AG04449 (cell line): ENCODE measurements at regions of chr1 and their contacts with region 1.

Region 1: GRCh38 chr1:1906185-1907097 is 8.6 kb upstream of the CALML6 start:
- DNase-seq: no peak
- H3K4me3 ChIP-seq: no peak overlapping the region
- CTCF ChIP-seq: peak; percentile 97

Region 2: DNA sequence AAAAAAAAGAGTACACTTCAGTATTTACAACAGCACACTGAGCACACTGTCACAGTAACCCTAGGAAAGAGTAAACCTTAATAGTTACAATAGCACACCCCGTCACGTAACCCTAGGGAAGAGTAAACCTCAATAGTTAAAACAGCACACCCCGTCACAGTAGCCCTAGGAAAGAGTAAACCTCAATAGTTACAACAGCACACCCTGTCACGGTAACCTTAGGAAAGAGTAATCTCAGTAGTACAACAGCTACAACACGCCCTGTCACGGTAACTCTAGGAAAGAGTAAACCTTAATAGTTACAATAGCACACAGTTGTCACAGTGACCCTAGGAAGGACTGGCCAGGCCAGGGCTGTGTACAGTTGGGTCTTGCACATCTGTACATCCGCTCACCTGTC is 185.2 kb before region 1 on chr1:
- CTCF ChIA-PET with region 1: interaction called, 11 read pairs
- POLR2A ChIA-PET with region 1: no interaction called
- DNase-seq: no peak
- H3K4me3 ChIP-seq: no peak overlapping the region
- CTCF ChIP-seq: no peak

Region 3: DNA sequence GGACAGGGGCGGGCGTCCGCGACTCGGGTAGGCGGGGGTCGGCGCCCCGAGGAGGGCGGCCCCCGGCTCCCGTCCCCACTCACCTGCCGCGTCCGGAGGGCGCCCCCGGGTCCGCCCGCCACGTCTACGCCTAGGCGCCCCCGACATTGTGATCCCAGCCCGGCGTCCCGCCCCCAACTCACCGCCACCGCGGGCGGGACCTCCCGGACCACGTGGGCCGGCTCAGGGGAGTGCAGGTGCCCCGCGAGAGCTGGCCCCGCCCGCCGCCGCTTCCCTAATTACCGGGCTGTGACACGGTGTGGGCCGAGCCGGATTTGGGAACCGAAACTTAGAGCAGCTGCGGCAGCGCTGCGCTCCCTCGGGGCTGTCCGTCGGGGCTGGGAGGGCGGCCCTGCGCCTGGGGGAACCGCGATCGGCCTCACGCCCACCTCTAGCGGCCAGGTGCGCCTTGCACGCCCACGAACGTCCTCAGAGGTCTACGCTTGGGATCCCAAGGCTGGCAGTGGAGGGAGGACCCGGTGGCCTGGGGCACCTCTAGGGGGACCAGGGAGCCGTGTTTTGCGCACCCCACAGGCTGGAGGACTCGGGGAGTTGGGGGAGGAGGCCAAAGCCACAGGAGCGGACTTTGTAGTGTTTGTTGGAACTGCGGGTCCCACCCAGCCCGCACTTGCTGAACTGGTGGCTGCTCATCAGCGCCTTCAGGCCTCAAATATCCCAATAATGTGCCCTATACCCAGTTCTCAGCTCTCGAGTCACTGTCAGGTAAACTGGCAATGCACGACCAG is 127.6 kb before region 1 on chr1:
- CTCF ChIA-PET with region 1: interaction called, 18 read pairs
- POLR2A ChIA-PET with region 1: interaction called, 4 read pairs
- DNase-seq: no peak
- H3K4me3 ChIP-seq: peak overlapping the region; percentile 82
- CTCF ChIP-seq: no peak

Region 4: DNA sequence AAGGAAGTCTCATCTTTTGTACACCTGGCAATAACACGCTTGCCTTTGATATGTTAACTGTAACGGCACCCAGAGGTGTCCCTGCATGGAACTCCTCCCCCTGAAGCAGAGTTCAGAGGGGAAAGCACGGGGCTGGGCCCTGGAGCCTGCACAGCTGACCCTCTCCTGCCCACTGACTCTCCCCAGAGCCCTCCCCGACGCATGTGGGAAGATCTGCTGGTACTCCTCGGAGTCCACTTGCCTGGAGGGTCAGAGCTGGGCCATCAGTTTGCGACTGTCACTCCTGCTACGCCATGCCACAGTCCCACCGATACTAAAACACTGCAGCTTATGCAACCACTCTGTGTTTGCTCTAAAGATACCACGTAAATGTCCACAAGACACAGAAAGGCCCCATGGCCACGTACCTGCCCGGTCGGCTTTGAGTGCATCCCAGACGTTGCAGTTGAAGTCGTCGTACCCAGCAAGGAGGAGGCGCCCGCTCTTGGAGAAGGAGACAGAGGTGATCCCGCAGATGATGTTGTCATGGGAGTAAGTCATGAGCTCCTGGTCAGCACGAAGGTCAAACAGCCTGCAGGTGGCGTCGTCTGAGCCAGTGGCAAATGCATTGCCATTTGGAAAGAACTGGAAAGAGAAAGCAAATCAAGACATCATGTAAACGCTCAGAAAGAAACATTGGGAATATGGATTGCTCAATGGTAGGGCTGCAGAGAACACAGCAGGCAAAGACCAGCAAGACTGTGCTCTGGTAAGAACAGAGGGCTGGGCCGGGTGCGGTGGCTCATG is 117.6 kb before region 1 on chr1:
- CTCF ChIA-PET with region 1: interaction called, 17 read pairs
- POLR2A ChIA-PET with region 1: no interaction called
- DNase-seq: no peak
- H3K4me3 ChIP-seq: no peak overlapping the region
- CTCF ChIP-seq: peak; percentile 23

Region 5: GRCh38 chr1:1804301-1804700 is 102.1 kb before region 1 on chr1:
- CTCF ChIA-PET with region 1: interaction called, 15 read pairs
- POLR2A ChIA-PET with region 1: no interaction called
- DNase-seq: no peak
- H3K4me3 ChIP-seq: no peak overlapping the region
- CTCF ChIP-seq: no peak

Region 6: DNA sequence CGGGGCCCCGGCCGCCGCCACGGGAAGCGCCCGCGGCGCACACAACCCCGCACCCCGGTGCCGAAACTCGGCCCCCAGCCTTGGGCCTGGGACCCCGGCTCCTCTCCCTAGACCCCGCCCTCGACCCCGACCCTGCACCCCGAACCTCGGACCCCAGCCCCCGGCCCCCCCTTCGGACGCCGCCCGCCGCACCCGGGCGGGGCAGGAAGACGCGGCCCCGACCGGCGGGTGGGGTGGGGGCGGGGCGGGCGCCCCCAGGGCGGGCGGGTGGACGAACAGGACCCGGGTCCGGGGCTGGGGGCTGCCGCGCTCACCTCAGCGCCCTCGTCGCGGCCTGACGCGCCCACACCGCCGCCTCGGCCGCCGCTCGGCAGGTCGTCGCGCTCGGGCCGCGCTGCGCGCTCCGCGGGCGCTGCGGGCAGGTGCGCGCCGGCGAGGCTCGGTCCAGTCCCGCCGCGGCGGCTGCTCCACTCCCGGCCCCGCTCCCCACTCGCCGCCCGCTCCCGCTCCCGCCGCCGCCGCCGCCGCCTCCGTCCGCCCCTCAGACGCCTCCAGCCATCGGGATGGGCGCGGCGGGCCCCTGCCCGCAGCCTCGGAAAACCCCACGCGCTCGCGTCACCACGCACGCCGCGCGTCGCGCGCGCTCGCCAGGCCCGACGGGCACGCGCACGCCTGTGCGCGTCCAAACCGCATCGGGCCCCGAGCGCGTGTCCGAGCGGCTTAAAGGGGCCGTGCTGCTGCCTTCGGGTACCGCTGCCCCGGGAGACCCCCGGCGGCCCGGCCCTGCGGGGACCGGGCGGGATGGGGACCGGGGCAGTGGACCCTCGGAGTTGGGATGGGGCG is 15.7 kb before region 1 on chr1 and contains the start of gene GNB1:
- CTCF ChIA-PET with region 1: interaction called, 75 read pairs
- POLR2A ChIA-PET with region 1: interaction called, 4 read pairs
- DNase-seq: no peak
- H3K4me3 ChIP-seq: peak within 1 kb of the TSS; percentile 83
- CTCF ChIP-seq: no peak

Region 7: GRCh38 chr1:2085080-2085479 is 178.6 kb after region 1 on chr1:
- CTCF ChIA-PET with region 1: no interaction called
- POLR2A ChIA-PET with region 1: no interaction called
- DNase-seq: no peak
- H3K4me3 ChIP-seq: no peak overlapping the region
- CTCF ChIP-seq: no peak